ENCODE measurements at regions of chr7 and their contacts with region 1.

Region 1: DNA sequence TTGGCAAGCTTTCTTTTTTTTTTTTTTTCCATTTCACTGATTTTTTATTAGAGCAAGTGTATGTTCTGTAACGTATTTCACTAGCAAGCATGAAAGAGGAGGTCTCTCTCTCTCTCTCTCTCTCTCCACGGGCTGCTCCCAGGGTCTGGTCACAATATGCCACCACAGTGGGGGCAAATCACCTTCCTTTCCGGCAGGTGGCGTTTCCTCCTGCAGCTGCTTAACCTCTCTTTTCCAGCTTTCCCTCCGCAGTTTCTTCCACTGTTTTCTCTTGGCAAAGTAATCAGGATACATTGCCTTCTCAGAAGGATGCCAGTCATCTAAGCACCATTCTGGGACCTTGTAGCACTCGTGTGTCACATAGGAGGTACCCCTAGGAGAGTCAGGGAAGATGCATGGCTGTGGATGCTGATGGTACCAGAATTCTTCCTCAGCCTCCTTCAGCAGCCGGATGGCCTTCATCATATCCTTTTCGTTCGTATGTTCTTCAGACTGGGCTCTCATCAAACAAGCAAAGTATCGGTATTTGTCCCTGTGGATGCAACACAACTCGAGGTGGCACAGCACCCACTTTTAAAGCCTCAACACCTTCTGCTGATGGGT is 197.3 kb upstream of the PODXL start:
- DNase-seq: peak in 1 of 2 experiments; percentile 9
- H3K4me3 ChIP-seq: no peak overlapping the region
- H3K27ac ChIP-seq: no peak overlapping the region
- H3K4me1 ChIP-seq: no peaks in the 10 kb centered on the region
- H3K27me3 ChIP-seq: peaks cover 64% of the 10 kb centered on the region
- CTCF ChIP-seq: peak; percentile 60

Region 2: DNA sequence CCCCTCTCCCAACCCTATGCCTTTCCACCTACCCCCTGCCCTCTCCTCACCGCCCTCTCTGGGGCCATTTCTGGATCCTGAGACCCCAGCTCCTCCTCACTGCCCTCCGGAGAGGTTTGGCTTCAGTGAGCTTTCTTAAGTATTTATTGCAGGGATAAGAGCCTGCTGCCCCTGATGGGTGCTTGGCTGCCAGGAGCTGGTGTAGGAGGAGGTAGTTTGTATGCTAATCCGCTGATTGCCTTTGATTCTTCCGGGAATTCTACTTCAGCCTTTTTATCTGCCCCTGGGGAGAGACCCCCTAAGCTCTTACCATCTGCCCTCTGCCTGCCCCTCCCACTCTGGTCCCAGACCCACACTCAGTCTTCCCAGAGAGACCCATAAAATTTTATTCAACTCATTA is 66.2 kb after region 1 on chr7:
- CTCF ChIA-PET with region 1: no interaction called
- POLR2A ChIA-PET with region 1: no interaction called
- intact Hi-C with region 1: no loop called
- DNase-seq: no peak
- H3K4me3 ChIP-seq: no peak overlapping the region
- H3K27ac ChIP-seq: no peak overlapping the region
- H3K4me1 ChIP-seq: no peaks in the 10 kb centered on the region
- H3K27me3 ChIP-seq: peaks cover 87% of the 10 kb centered on the region
- CTCF ChIP-seq: no peak

Region 3: DNA sequence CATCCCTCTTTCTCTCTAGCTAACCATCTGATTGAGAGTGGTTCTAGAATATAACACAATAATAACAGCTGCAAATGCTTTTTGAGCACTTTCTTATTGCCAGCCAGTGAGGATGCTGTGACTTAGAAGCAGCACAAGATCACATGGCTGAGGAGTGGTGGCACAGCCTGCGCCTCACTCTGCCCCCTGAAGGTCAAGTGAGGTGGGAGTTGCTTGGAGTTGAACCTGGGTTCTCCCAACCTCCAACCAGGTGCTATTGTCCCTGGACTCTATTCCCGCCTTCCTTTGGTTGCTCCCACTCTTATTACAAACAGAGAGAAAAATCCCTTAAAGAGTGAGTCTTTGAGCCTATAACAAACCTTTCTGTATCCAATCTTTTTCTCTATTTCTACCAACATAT is 83.0 kb after region 1 on chr7:
- CTCF ChIA-PET with region 1: no interaction called
- POLR2A ChIA-PET with region 1: no interaction called
- intact Hi-C with region 1: no loop called
- DNase-seq: no peak
- H3K4me3 ChIP-seq: no peak overlapping the region
- H3K27ac ChIP-seq: no peak overlapping the region
- H3K4me1 ChIP-seq: no peaks in the 10 kb centered on the region
- H3K27me3 ChIP-seq: peaks cover 100% of the 10 kb centered on the region
- CTCF ChIP-seq: no peak

Region 4: GRCh38 chr7:132609906-132610520 is 856.3 kb after region 1 on chr7:
- CTCF ChIA-PET with region 1: no interaction called
- POLR2A ChIA-PET with region 1: interaction called, 18 read pairs
- intact Hi-C with region 1: no loop called
- DNase-seq: no peak
- H3K4me3 ChIP-seq: no peak overlapping the region
- H3K27ac ChIP-seq: no peak overlapping the region
- H3K4me1 ChIP-seq: no peaks in the 10 kb centered on the region
- H3K27me3 ChIP-seq: peaks cover 62% of the 10 kb centered on the region
- CTCF ChIP-seq: no peak